ENCODE measurements at regions of chr7 and their contacts with region 1.

Region 1: GRCh38 chr7:7968543-7969305 is at the start of gene GLCCI1:
- DNase-seq: peak; percentile 93
- ATAC-seq: peak; percentile 89
- H3K4me3 Mint-ChIP-seq: peak within 1 kb of the TSS; percentile 92
- H3K27ac Mint-ChIP-seq: peak within 1 kb of the TSS; percentile 96
- H3K4me1 Mint-ChIP-seq: peaks cover 36% of the 10 kb centered on the region
- H3K27me3 Mint-ChIP-seq: no peaks in the 10 kb centered on the region
- CTCF ChIP-seq: no peak
- total RNA-seq, gene GLCCI1: 32.4 and 37.4 TPM in 2 replicates

Region 2: GRCh38 chr7:7014827-7015610 is 953.7 kb before region 1 on chr7:
- CTCF ChIA-PET with region 1: no interaction called
- POLR2A ChIA-PET with region 1: no interaction called
- intact Hi-C with region 1: no loop called
- DNase-seq: no peak
- ATAC-seq: no peak
- H3K4me3 Mint-ChIP-seq: no peak overlapping the region
- H3K27ac Mint-ChIP-seq: no peak overlapping the region
- H3K4me1 Mint-ChIP-seq: no peaks in the 10 kb centered on the region
- H3K27me3 Mint-ChIP-seq: peaks cover 24% of the 10 kb centered on the region
- CTCF ChIP-seq: no peak

Region 3: GRCh38 chr7:7257899-7258692 is 710.6 kb before region 1 on chr7:
- CTCF ChIA-PET with region 1: no interaction called
- POLR2A ChIA-PET with region 1: no interaction called
- intact Hi-C with region 1: loop called (anchors 5 kb)
- DNase-seq: no peak
- ATAC-seq: peak; percentile 77
- H3K4me3 Mint-ChIP-seq: peak overlapping the region; percentile 78
- H3K27ac Mint-ChIP-seq: peak overlapping the region; percentile 89
- H3K4me1 Mint-ChIP-seq: peaks cover 66% of the 10 kb centered on the region
- H3K27me3 Mint-ChIP-seq: no peaks in the 10 kb centered on the region
- CTCF ChIP-seq: no peak

Region 4: DNA sequence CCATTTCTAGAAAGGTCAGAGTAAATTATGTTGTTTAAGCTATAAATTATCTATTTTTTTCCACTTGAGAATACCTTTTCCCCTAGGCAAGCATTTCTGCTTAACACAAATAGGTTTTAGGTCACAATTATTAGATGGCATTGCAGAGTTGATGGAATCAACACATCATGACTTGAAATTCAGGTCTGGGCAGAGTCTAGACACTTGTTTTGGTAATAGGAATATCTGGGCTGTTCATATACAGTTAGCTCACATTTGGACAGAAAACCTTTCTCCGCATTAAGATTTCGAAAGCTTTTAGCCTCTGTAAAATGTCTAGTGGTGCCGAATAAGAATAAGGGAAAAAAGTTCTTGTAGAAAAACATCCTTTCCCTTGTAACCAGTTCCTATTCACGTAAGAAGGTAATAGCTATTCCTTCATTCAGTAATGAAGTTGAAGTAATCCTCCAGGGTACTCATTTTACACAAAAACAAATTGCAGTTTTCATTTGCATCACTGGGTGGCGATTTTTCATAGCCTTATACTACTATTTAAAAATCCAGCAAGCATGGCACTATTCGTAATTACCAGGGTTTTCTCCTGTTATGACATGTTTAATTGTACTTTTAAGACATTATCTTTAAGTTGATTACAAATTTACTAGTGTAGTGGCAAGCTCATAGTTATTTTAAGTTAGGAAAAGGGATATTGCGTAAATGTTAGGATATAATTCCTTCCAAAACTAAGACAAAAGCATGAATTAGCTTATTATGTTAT is 287.4 kb before region 1 on chr7:
- CTCF ChIA-PET with region 1: interaction called, 19 read pairs
- POLR2A ChIA-PET with region 1: interaction called, 14 read pairs
- intact Hi-C with region 1: loop called (anchors 2 kb)
- DNase-seq: no peak
- ATAC-seq: peak; percentile 84
- H3K4me3 Mint-ChIP-seq: no peak overlapping the region
- H3K27ac Mint-ChIP-seq: peak overlapping the region; percentile 50
- H3K4me1 Mint-ChIP-seq: peaks cover 27% of the 10 kb centered on the region
- H3K27me3 Mint-ChIP-seq: no peaks in the 10 kb centered on the region
- CTCF ChIP-seq: no peak

Region 5: GRCh38 chr7:7857143-7857583 is 111.6 kb before region 1 on chr7:
- CTCF ChIA-PET with region 1: no interaction called
- POLR2A ChIA-PET with region 1: interaction called, 3 read pairs
- intact Hi-C with region 1: loop called (anchors 2 kb)
- DNase-seq: no peak
- ATAC-seq: peak; percentile 83
- H3K4me3 Mint-ChIP-seq: peak overlapping the region; percentile 63
- H3K27ac Mint-ChIP-seq: peak overlapping the region; percentile 90
- H3K4me1 Mint-ChIP-seq: peaks cover 32% of the 10 kb centered on the region
- H3K27me3 Mint-ChIP-seq: no peaks in the 10 kb centered on the region
- CTCF ChIP-seq: no peak

Region 6: GRCh38 chr7:7957513-7957912 is 11.2 kb before region 1 on chr7:
- CTCF ChIA-PET with region 1: interaction called, 4 read pairs
- POLR2A ChIA-PET with region 1: interaction called, 12 read pairs
- intact Hi-C with region 1: no loop called
- DNase-seq: no peak
- ATAC-seq: no peak
- H3K4me3 Mint-ChIP-seq: no peak overlapping the region
- H3K27ac Mint-ChIP-seq: no peak overlapping the region
- H3K4me1 Mint-ChIP-seq: no peaks in the 10 kb centered on the region
- H3K27me3 Mint-ChIP-seq: no peaks in the 10 kb centered on the region
- CTCF ChIP-seq: no peak

Region 7: GRCh38 chr7:8115547-8116402 is 147.1 kb after region 1 on chr7:
- CTCF ChIA-PET with region 1: no interaction called
- POLR2A ChIA-PET with region 1: interaction called, 7 read pairs
- intact Hi-C with region 1: loop called (anchors 1 kb)
- DNase-seq: no peak
- ATAC-seq: peak; percentile 92
- H3K4me3 Mint-ChIP-seq: peak overlapping the region; percentile 46
- H3K27ac Mint-ChIP-seq: peak overlapping the region; percentile 74
- H3K4me1 Mint-ChIP-seq: peaks cover 48% of the 10 kb centered on the region
- H3K27me3 Mint-ChIP-seq: no peaks in the 10 kb centered on the region
- CTCF ChIP-seq: no peak

Region 8: DNA sequence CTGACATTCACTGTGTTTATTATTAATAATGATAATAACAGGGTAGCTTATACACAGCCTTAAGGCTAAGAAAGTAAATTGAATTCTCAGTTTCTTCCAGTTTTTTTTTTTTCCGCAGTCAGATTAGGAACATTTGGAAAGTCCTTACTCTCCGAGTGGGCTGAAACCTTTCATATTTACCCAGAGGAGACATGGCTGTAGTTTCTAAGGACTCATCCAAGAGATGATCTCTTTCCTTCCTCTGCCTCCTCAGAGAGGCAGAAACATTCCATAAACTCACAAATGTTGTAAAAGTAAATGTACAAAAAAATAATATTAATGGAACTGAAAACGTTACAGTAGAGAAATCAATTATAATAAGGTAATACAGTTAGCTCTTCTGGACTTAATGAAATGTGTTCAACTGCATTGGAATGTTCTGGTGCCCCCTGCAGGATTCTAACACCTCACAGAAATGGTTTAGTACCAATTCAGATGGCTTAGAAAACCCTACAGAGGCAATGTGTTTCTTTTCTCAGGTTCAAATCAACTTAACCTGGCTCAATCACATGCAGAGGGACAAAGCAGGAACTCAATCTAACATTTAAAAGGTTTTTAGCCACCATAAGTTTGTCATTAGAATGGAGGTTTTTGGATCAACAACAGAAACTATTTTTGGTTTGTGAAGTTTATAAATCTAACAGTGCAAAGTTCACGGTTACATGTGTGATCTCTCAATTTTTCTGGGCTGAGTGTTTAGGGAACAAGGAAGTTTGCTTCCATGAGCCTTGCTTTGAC is 221.6 kb after region 1 on chr7:
- CTCF ChIA-PET with region 1: interaction called, 6 read pairs
- POLR2A ChIA-PET with region 1: interaction called, 7 read pairs
- intact Hi-C with region 1: loop called (anchors 2 kb)
- DNase-seq: no peak
- ATAC-seq: peak; percentile 87
- H3K4me3 Mint-ChIP-seq: no peak overlapping the region
- H3K27ac Mint-ChIP-seq: no peak overlapping the region
- H3K4me1 Mint-ChIP-seq: peaks cover 20% of the 10 kb centered on the region
- H3K27me3 Mint-ChIP-seq: no peaks in the 10 kb centered on the region
- CTCF ChIP-seq: no peak